ENCODE measurements at regions of chr19 and their contacts with region 1.

Region 1: GRCh38 chr19:46840136-46840942 is 10.3 kb downstream of the AP2S1 start:
- DNase-seq: peak in 1 of 2 experiments; percentile 77
- ATAC-seq: peak; percentile 61 to 77; a peak in 5 of 6 replicates
- H3K4me3 ChIP-seq: no peak overlapping the region
- H3K27ac ChIP-seq: peak overlapping the region in 1 of 2 experiments; percentile 20; a peak in 2 of 6 replicates
- H3K4me1 ChIP-seq: peaks cover 18% of the 10 kb centered on the region; the same call in 2 of the 3 replicates
- CTCF ChIP-seq: peak; percentile 96
- EP300 ChIP-seq: no peak
- POLR2A ChIP-seq: no peak
- RAD21 ChIP-seq: peak; percentile 95

Region 2: DNA sequence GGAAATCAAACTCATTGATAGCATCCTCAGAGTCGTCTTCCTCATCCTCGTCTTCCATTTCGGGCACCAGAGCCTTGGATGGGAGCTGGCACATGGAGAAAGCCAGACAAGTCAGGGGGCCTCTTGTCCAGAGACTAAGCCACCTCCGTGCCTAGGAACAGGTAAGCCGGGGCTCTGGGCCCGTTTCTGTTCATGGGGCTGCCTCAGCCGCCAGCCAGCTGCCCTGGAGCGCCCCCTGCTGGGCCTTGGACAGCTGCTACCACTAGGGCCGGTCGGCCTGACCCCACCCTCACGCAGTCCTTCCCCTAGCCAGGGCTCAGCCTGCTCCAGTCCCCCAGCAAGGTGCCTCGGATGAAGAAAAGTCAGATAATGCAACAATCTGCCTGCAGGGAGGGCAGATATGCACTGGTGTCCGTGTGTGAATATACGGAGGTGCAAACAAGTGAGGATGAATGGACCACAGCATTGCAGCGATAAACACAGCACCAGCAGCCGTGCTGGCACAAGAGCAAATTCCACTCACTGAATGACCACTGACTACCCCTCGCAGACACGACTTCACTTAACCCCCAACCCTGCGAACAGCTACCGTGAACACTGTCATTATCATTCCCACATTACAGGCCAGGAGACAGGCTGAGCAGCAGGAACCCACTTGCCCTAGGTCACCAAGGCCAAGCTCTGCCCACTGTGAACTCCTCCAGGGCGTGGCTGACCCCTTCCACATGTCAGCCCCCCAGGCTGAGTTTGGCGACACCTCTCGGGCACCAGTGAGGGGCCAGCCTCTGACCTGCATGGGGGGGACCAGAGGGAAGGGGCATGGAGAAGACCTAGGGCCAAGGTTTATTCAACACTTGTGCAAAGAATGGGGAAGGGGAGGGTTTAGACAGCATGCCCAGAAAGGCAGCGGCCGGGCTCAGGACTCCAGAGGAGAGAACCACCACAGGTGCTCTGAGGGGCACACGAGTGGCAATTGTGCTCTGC is 111.4 kb before region 1 on chr19:
- CTCF ChIA-PET with region 1: interaction called, 15 read pairs
- POLR2A ChIA-PET with region 1: no interaction called
- DNase-seq: peak; percentile 72 to 92
- ATAC-seq: peak; percentile 61 to 89
- H3K4me3 ChIP-seq: no peak overlapping the region
- H3K27ac ChIP-seq: peak overlapping the region in 1 of 2 experiments; percentile 22; a peak in 1 of 6 replicates
- H3K4me1 ChIP-seq: peaks cover 40% of the 10 kb centered on the region
- CTCF ChIP-seq: peak; percentile 97
- EP300 ChIP-seq: no peak
- POLR2A ChIP-seq: no peak
- RAD21 ChIP-seq: peak; percentile 73 to 76

Region 3: DNA sequence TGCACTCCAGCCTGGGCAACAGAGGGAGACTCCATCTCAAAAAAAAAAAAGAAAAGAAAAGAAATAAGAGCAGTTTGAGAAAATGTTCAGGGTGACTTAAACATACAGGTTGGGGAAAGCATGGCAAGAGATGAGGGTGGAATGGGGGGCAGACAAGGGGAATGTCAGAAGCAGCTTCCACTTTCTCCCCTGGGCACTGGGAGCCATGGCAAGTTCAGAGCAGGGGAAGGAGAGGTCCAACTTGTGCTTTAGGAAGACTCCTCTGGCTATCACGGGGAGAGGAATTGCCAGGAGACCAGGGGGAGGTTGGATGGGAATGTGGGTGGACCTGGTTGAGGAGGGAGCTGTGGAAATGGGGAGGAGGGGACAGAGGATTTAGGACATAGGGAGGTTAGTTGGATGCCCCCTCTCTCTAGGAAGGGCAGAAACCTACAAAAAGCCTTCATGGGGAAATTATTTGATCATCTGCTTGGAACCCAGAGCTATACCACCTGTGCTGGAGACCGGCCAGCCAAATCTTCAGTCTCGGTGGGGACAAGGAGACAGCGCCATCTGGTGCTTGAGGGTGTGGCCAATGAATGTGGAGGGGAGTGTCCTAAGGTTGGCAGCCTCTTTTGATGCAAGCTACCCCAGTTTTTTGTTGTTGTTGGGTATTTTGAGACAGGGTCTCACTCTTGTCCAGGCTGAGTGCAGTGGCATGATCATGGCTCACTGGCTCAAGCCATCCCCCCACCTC is 86.8 kb before region 1 on chr19:
- CTCF ChIA-PET with region 1: interaction called, 1,222 read pairs
- POLR2A ChIA-PET with region 1: interaction called, 12 read pairs
- DNase-seq: peak; percentile 64 to 79
- ATAC-seq: peak; percentile 22 to 45; a peak in 3 of 6 replicates
- H3K4me3 ChIP-seq: no peak overlapping the region
- H3K27ac ChIP-seq: no peak overlapping the region
- H3K4me1 ChIP-seq: peaks cover 4% of the 10 kb centered on the region; the same call in 1 of the 3 replicates
- CTCF ChIP-seq: peak; percentile 65
- EP300 ChIP-seq: no peak
- POLR2A ChIP-seq: no peak
- RAD21 ChIP-seq: peak in 1 of 2 experiments; percentile 46; a peak in 1 of 5 replicates

Region 4: DNA sequence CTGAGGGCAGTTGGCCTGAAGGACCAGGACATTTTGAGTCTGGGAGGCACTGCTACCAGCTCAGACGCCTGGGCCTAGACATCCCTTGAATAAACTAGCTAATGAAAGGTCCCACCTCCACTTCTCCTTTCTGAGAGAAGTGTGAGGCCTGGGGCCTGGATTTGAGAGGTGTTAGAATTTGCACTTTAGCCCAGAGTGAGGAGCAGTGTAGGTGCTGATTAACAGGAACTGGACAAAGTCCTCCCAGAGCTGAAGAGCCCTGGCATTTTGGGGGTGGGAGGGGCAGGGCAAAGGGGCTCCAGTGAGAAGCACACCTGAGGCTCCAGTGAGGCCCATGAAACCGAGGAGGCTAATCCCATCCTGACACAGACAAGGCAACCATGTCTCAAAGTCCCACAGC is 36.8 kb before region 1 on chr19:
- CTCF ChIA-PET with region 1: interaction called, 20 read pairs
- POLR2A ChIA-PET with region 1: no interaction called
- DNase-seq: no peak
- ATAC-seq: no peak; a peak in 1 of 6 replicates
- H3K4me3 ChIP-seq: no peak overlapping the region
- H3K27ac ChIP-seq: peak overlapping the region in 1 of 2 experiments; percentile 47; a peak in 3 of 6 replicates
- H3K4me1 ChIP-seq: peaks cover 12% of the 10 kb centered on the region; the same call in 2 of the 3 replicates
- CTCF ChIP-seq: no peak
- EP300 ChIP-seq: no peak
- POLR2A ChIP-seq: no peak
- RAD21 ChIP-seq: no peak

Region 5: GRCh38 chr19:46821498-46822409 is 18.6 kb before region 1 on chr19:
- CTCF ChIA-PET with region 1: interaction called, 36 read pairs
- POLR2A ChIA-PET with region 1: no interaction called
- DNase-seq: no peak
- ATAC-seq: peak; percentile 11 to 32; a peak in 3 of 6 replicates
- H3K4me3 ChIP-seq: no peak overlapping the region
- H3K27ac ChIP-seq: peak overlapping the region in 1 of 2 experiments; percentile 15; a peak in 1 of 6 replicates
- H3K4me1 ChIP-seq: no peaks in the 10 kb centered on the region
- CTCF ChIP-seq: no peak
- EP300 ChIP-seq: no peak
- POLR2A ChIP-seq: no peak
- RAD21 ChIP-seq: no peak

Region 6: GRCh38 chr19:46850228-46851203 is 10.2 kb after region 1 on chr19 and contains the start of gene AP2S1:
- CTCF ChIA-PET with region 1: interaction called, 45 read pairs
- POLR2A ChIA-PET with region 1: interaction called, 9 read pairs
- DNase-seq: peak; percentile 99
- ATAC-seq: peak; percentile 97 to 98
- H3K4me3 ChIP-seq: peak within 1 kb of the TSS; percentile 67
- H3K27ac ChIP-seq: peak within 1 kb of the TSS; percentile 81 to 93
- H3K4me1 ChIP-seq: peaks cover 10% of the 10 kb centered on the region
- CTCF ChIP-seq: no peak
- EP300 ChIP-seq: no peak
- POLR2A ChIP-seq: peak; percentile 79
- RAD21 ChIP-seq: 0 out of 5 replicates have a peak, but pooled peaks of 1 of the 2 experiments have one; percentile 5
- polyA plus RNA-seq, gene AP2S1: 117 and 150 TPM in 2 replicates

Region 7: GRCh38 chr19:46954993-46955812 is 114.9 kb after region 1 on chr19:
- CTCF ChIA-PET with region 1: no interaction called
- POLR2A ChIA-PET with region 1: no interaction called
- DNase-seq: no peak
- ATAC-seq: no peak
- H3K4me3 ChIP-seq: no peak overlapping the region
- H3K27ac ChIP-seq: peak overlapping the region; percentile 2 to 49; a peak in 2 of 6 replicates
- H3K4me1 ChIP-seq: peaks cover 54% of the 10 kb centered on the region
- CTCF ChIP-seq: no peak
- EP300 ChIP-seq: no peak
- POLR2A ChIP-seq: no peak
- RAD21 ChIP-seq: no peak

Measured in A549 (cell line).